B cell (primary cell): ENCODE measurements at regions of chr2 and their contacts with region 1.

Region 1: DNA sequence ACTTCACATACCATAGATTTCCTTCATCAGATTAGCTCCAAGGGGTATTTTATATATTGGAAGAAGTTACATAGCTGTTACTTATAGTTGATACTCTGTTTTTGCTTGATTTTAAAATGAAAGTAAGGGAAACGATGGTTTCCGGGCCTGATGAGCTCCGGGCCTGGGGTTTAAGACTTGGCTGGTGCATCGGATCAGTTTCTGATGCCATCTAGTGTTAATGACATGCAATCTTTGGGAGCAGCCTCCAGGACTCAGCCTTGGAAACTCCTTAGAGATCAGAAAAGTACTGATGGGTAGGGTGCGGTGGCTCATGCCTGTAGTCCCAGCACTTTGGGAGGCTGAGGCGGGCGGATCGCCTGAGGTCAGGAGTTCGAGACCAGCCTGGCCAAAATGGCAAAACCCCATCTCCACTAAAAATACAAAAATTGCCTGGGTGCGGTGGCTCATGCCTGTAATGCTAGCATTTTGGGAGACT is 47.1 kb upstream of the CNOT11 start:
- DNase-seq: peak; percentile 54
- ATAC-seq: peak; percentile 86
- H3K4me3 ChIP-seq: peak overlapping the region in 1 of 5 experiments; percentile 41
- H3K4me3 Mint-ChIP-seq: peak overlapping the region; percentile 66
- H3K27ac ChIP-seq: no peak overlapping the region
- H3K27ac Mint-ChIP-seq: peak overlapping the region; percentile 26
- H3K4me1 ChIP-seq: no peaks in the 10 kb centered on the region
- H3K4me1 Mint-ChIP-seq: peaks cover 7% of the 10 kb centered on the region
- H3K27me3 ChIP-seq: no peaks in the 10 kb centered on the region
- H3K27me3 Mint-ChIP-seq: peaks cover 4% of the 10 kb centered on the region
- CTCF ChIP-seq: peak; percentile 27

Region 2: GRCh38 chr2:100193291-100193710 is 1012.3 kb before region 1 on chr2:
- CTCF ChIA-PET with region 1: no interaction called
- POLR2A ChIA-PET with region 1: no interaction called
- intact Hi-C with region 1: no loop called
- DNase-seq: no peak
- ATAC-seq: no peak
- H3K4me3 ChIP-seq: no peak overlapping the region
- H3K4me3 Mint-ChIP-seq: no peak overlapping the region
- H3K27ac ChIP-seq: no peak overlapping the region
- H3K27ac Mint-ChIP-seq: no peak overlapping the region
- H3K4me1 ChIP-seq: no peaks in the 10 kb centered on the region
- H3K4me1 Mint-ChIP-seq: peaks cover 8% of the 10 kb centered on the region
- H3K27me3 ChIP-seq: no peaks in the 10 kb centered on the region
- H3K27me3 Mint-ChIP-seq: peaks cover 12% of the 10 kb centered on the region
- CTCF ChIP-seq: no peak

Region 3: GRCh38 chr2:101018934-101019333 is 186.6 kb before region 1 on chr2:
- CTCF ChIA-PET with region 1: interaction called, 213 read pairs
- POLR2A ChIA-PET with region 1: no interaction called
- intact Hi-C with region 1: no loop called
- DNase-seq: no peak
- ATAC-seq: no peak
- H3K4me3 ChIP-seq: no peak overlapping the region
- H3K4me3 Mint-ChIP-seq: no peak overlapping the region
- H3K27ac ChIP-seq: no peak overlapping the region
- H3K27ac Mint-ChIP-seq: no peak overlapping the region
- H3K4me1 ChIP-seq: no peaks in the 10 kb centered on the region
- H3K4me1 Mint-ChIP-seq: peaks cover 3% of the 10 kb centered on the region
- H3K27me3 ChIP-seq: no peaks in the 10 kb centered on the region
- H3K27me3 Mint-ChIP-seq: no peaks in the 10 kb centered on the region
- CTCF ChIP-seq: no peak

Region 4: GRCh38 chr2:101036562-101037457 is 168.8 kb before region 1 on chr2:
- CTCF ChIA-PET with region 1: interaction called, 87 read pairs
- POLR2A ChIA-PET with region 1: no interaction called
- intact Hi-C with region 1: loop called (anchors 1 kb)
- DNase-seq: no peak
- ATAC-seq: no peak
- H3K4me3 ChIP-seq: no peak overlapping the region
- H3K4me3 Mint-ChIP-seq: no peak overlapping the region
- H3K27ac ChIP-seq: no peak overlapping the region
- H3K27ac Mint-ChIP-seq: no peak overlapping the region
- H3K4me1 ChIP-seq: no peaks in the 10 kb centered on the region
- H3K4me1 Mint-ChIP-seq: peaks cover 2% of the 10 kb centered on the region
- H3K27me3 ChIP-seq: no peaks in the 10 kb centered on the region
- H3K27me3 Mint-ChIP-seq: peaks cover 4% of the 10 kb centered on the region
- CTCF ChIP-seq: peak; percentile 27

Region 5: DNA sequence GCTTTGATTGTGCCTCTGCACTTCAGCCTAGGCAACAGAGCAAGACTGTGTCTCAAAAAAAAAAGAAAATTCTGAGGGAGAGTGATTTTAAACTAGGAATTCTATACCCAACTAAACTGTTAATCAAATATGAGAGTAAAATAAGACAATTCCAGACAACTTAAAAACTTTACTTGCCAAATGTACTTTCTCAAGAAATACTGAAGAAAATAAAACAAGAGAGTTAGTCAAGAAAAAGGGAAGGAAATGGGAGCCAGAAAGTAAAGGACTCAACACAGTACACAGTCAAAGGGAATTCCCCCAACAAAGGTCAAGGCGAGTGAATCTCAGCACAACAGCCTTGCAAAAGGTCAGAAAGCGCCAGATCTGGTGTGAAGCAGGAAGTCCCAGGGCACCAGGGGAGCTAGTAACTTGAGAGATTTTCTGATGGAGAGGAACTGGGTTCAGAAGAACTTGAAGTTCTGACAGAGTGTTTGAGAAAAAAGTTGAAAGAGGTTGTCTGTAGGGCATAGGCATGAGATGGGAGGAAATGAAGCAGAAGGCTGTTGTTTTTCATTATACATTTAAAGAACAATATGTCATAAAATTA is 31.8 kb before region 1 on chr2:
- CTCF ChIA-PET with region 1: interaction called, 21 read pairs
- POLR2A ChIA-PET with region 1: interaction called, 8 read pairs
- intact Hi-C with region 1: no loop called
- DNase-seq: peak; percentile 62
- ATAC-seq: peak; percentile 99
- H3K4me3 ChIP-seq: no peak overlapping the region
- H3K4me3 Mint-ChIP-seq: peak overlapping the region; percentile 44
- H3K27ac ChIP-seq: peak overlapping the region in 1 of 2 donors; percentile 69
- H3K27ac Mint-ChIP-seq: peak overlapping the region; percentile 84
- H3K4me1 ChIP-seq: peaks cover 14 to 20% of the 10 kb centered on the region in 2 donors
- H3K4me1 Mint-ChIP-seq: peaks cover 24% of the 10 kb centered on the region
- H3K27me3 ChIP-seq: no peaks in the 10 kb centered on the region
- H3K27me3 Mint-ChIP-seq: no peaks in the 10 kb centered on the region
- CTCF ChIP-seq: no peak

Region 6: GRCh38 chr2:101337877-101338276 is 132.3 kb after region 1 on chr2:
- CTCF ChIA-PET with region 1: no interaction called
- POLR2A ChIA-PET with region 1: no interaction called
- intact Hi-C with region 1: no loop called
- DNase-seq: no peak
- ATAC-seq: no peak
- H3K4me3 ChIP-seq: no peak overlapping the region
- H3K4me3 Mint-ChIP-seq: no peak overlapping the region
- H3K27ac ChIP-seq: no peak overlapping the region
- H3K27ac Mint-ChIP-seq: no peak overlapping the region
- H3K4me1 ChIP-seq: peaks cover 0 to 8% of the 10 kb centered on the region in 2 donors
- H3K4me1 Mint-ChIP-seq: peaks cover 7% of the 10 kb centered on the region
- H3K27me3 ChIP-seq: no peaks in the 10 kb centered on the region
- H3K27me3 Mint-ChIP-seq: peaks cover 4% of the 10 kb centered on the region
- CTCF ChIP-seq: no peak